ENCODE measurements at regions of chr2 and their contacts with region 1.

Region 1: GRCh38 chr2:232550354-232551249 is at the starts of genes EIF4E2 and TIGD1:
- DNase-seq: peak; percentile 82 to 93 (median 90)
- ATAC-seq: peak; percentile 91
- H3K4me3 ChIP-seq: peak within 1 kb of the TSS; percentile 88
- H3K4me3 Mint-ChIP-seq: peak within 1 kb of the TSS; percentile 91 to 100 (median 100)
- H3K27ac ChIP-seq: peak within 1 kb of the TSS; percentile 92
- H3K27ac Mint-ChIP-seq: peak within 1 kb of the TSS; percentile 97 to 100 (median 100)
- H3K4me1 ChIP-seq: peaks cover 15 to 36% of the 10 kb centered on the region in 2 donors
- H3K4me1 Mint-ChIP-seq: peaks cover 53 to 86% (median 83%) of the 10 kb centered on the region in 7 donors
- H3K27me3 ChIP-seq: no peaks in the 10 kb centered on the region
- H3K27me3 Mint-ChIP-seq: no peaks in the 10 kb centered on the region
- total RNA-seq, gene EIF4E2: 51.9 to 77.6 (median 61.6) TPM
- total RNA-seq, gene TIGD1: 9.7 to 23.4 (median 19.3) TPM

Region 2: GRCh38 chr2:231463698-231464575 is 1086.7 kb before region 1 on chr2 and contains the start of gene NCL:
- CTCF ChIA-PET with region 1: no interaction called
- POLR2A ChIA-PET with region 1: interaction called, 4 read pairs
- intact Hi-C with region 1: loop called in 1 of 2 experiments (anchors 1 kb)
- DNase-seq: peak; percentile 75 to 96 (median 91)
- ATAC-seq: peak; percentile 73
- H3K4me3 ChIP-seq: peak within 1 kb of the TSS; percentile 65
- H3K4me3 Mint-ChIP-seq: peak within 1 kb of the TSS; percentile 90 to 99 (median 95)
- H3K27ac ChIP-seq: peak within 1 kb of the TSS; percentile 96
- H3K27ac Mint-ChIP-seq: peak within 1 kb of the TSS; percentile 96 to 100 (median 100)
- H3K4me1 ChIP-seq: peaks cover 26 to 28% of the 10 kb centered on the region in 2 donors
- H3K4me1 Mint-ChIP-seq: peaks cover 39 to 65% (median 44%) of the 10 kb centered on the region in 7 donors
- H3K27me3 ChIP-seq: no peaks in the 10 kb centered on the region
- H3K27me3 Mint-ChIP-seq: no peaks in the 10 kb centered on the region
- total RNA-seq, gene NCL: 411 to 647 (median 426) TPM

Region 3: GRCh38 chr2:231786177-231786916 is 764.3 kb before region 1 on chr2 and contains the start of gene COPS7B:
- CTCF ChIA-PET with region 1: no interaction called
- POLR2A ChIA-PET with region 1: interaction called, 3 read pairs
- intact Hi-C with region 1: loop called in 1 of 2 experiments (anchors 1 kb)
- DNase-seq: peak; percentile 62 to 87 (median 76)
- ATAC-seq: peak; percentile 77
- H3K4me3 ChIP-seq: peak within 1 kb of the TSS; percentile 88
- H3K4me3 Mint-ChIP-seq: peak within 1 kb of the TSS; percentile 85 to 95 (median 92)
- H3K27ac ChIP-seq: peak within 1 kb of the TSS; percentile 82
- H3K27ac Mint-ChIP-seq: peak within 1 kb of the TSS; percentile 48 to 95 (median 83)
- H3K4me1 ChIP-seq: peaks cover 24 to 31% of the 10 kb centered on the region in 2 donors
- H3K4me1 Mint-ChIP-seq: peaks cover 50 to 93% (median 85%) of the 10 kb centered on the region in 7 donors
- H3K27me3 ChIP-seq: no peaks in the 10 kb centered on the region
- H3K27me3 Mint-ChIP-seq: no peaks in the 10 kb centered on the region
- total RNA-seq, gene COPS7B: 33.4 to 60.6 (median 50.6) TPM

Region 4: DNA sequence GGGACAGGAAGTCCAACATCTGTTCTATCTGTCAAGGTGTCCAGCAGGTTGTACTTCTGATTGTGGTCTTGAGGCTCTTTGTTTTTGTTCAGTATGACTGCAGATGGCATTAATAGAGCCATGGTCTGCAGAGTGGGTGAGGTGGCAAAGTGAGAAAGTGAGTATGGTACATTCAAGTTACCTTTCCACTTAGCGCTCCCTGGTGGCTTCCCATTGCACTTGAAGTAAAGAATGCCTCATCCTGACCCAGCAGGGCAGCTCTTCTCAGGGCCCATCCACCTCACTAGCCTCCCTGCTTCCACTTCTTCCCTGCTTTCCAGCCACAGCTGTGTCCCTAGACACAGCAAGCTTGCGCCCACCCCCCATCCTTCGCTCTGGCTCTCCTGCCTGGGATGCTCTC is 320.0 kb before region 1 on chr2:
- CTCF ChIA-PET with region 1: no interaction called
- POLR2A ChIA-PET with region 1: no interaction called
- intact Hi-C with region 1: no loop called
- DNase-seq: no peak
- ATAC-seq: no peak
- H3K4me3 ChIP-seq: no peak overlapping the region
- H3K4me3 Mint-ChIP-seq: no peak overlapping the region
- H3K27ac ChIP-seq: no peak overlapping the region
- H3K27ac Mint-ChIP-seq: peak overlapping the region in 1 of 9 donors; percentile 39
- H3K4me1 ChIP-seq: no peaks in the 10 kb centered on the region
- H3K4me1 Mint-ChIP-seq: peaks cover 12 to 39% (median 24%) of the 10 kb centered on the region in 7 donors
- H3K27me3 ChIP-seq: no peaks in the 10 kb centered on the region
- H3K27me3 Mint-ChIP-seq: no peaks in the 10 kb centered on the region

Region 5: DNA sequence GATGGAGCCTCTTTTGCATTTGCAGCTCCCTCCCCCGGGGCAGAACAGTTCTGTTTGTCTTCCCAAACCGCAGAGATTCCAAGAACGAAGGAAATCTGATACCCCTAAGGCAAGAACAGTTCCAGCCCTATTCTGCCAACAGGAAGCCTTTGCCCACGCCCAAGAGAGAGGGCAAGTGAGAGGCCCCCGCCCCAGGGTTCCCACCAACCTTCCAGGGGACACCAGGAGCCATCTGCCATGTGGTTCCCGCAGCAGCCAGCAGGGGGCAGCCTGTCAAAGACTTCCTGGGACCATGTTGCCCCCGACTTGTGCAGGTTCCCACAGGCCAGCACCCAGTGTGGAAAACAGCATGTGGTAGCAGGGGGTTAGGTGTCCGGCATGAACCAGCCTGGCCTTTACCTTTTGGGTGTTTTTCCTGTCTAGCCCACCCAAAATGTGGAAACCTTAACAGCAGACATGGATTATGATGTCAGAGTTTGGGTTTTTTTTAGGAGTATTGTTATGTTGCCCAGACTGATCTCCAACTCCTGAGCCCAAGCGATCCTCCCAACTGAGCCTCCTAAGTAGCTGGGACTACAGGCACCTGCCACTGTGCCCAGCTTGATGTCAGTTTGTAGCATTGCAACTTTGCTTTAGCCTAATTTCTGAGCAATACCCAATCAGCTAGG is 61.1 kb after region 1 on chr2:
- CTCF ChIA-PET with region 1: no interaction called
- POLR2A ChIA-PET with region 1: no interaction called
- intact Hi-C with region 1: loop called (anchors 2 to 5 kb)
- DNase-seq: peak; percentile 18 to 72 (median 48)
- ATAC-seq: peak; percentile 72
- H3K4me3 ChIP-seq: no peak overlapping the region
- H3K4me3 Mint-ChIP-seq: no peak overlapping the region
- H3K27ac ChIP-seq: no peak overlapping the region
- H3K27ac Mint-ChIP-seq: no peak overlapping the region
- H3K4me1 ChIP-seq: no peaks in the 10 kb centered on the region
- H3K4me1 Mint-ChIP-seq: no peaks in the 10 kb centered on the region
- H3K27me3 ChIP-seq: no peaks in the 10 kb centered on the region
- H3K27me3 Mint-ChIP-seq: no peaks in the 10 kb centered on the region

Region 6: DNA sequence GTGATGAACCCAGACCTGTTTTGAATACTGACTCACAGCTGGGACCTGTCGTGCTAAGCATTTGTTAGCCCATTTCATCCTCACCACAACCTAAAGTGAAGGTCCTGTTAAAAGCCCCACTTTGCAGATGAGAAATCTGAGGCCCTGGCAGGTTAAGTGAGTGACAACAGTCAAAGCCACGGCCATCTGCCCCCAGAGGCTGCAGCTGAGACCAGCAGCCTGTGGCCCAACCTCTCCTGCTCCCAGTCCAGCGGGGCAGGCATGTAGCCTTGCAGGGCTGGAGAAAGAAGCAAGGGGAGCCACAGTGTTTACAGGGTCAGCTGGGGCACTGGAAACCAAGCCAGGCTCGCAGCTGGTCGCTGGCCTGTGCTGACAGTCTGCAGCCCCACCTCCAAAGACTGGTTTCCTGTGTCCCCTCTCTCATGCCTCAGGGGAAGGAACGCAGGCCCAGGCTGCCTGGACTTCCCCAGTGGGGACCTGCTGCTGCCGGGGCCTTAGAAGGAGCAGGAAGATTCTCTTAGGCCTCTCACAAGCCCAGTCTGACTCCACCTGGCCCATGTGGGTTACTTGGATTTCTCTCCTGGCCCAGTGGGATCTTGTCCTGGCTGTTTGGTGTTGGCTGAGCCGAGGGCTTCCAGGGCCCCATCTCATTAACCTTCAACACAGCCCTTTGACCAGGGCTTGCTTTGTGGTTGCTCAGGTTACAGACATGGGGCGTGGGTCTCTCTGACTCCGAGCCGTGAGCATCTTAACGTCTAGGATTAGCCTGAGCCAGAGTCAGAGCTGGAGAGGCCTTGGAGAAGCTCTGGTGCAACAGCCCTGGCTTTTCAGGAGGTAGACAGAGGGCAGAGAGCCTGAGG is 511.2 kb after region 1 on chr2:
- CTCF ChIA-PET with region 1: no interaction called
- POLR2A ChIA-PET with region 1: no interaction called
- intact Hi-C with region 1: loop called in 1 of 2 experiments (anchors 2 kb)
- DNase-seq: peak in 1 of 9 donors; percentile 41
- ATAC-seq: peak; percentile 32
- H3K4me3 ChIP-seq: peak overlapping the region; percentile 88
- H3K4me3 Mint-ChIP-seq: peak overlapping the region; percentile 86 to 98 (median 96)
- H3K27ac ChIP-seq: peak overlapping the region; percentile 85
- H3K27ac Mint-ChIP-seq: peak overlapping the region; percentile 90 to 99 (median 95)
- H3K4me1 ChIP-seq: peaks cover 33 to 41% of the 10 kb centered on the region in 2 donors
- H3K4me1 Mint-ChIP-seq: peaks cover 35 to 60% (median 48%) of the 10 kb centered on the region in 7 donors
- H3K27me3 ChIP-seq: no peaks in the 10 kb centered on the region
- H3K27me3 Mint-ChIP-seq: no peaks in the 10 kb centered on the region

Region 7: GRCh38 chr2:234300932-234301823 is 1750.6 kb after region 1 on chr2:
- CTCF ChIA-PET with region 1: no interaction called
- POLR2A ChIA-PET with region 1: no interaction called
- intact Hi-C with region 1: loop called in 1 of 2 experiments (anchors 5 kb)
- DNase-seq: peak in 3 of 9 donors; percentile 15 to 34 (median 21)
- ATAC-seq: no peak
- H3K4me3 ChIP-seq: peak overlapping the region; percentile 12
- H3K4me3 Mint-ChIP-seq: peak overlapping the region; percentile 16 to 81 (median 66)
- H3K27ac ChIP-seq: no peak overlapping the region
- H3K27ac Mint-ChIP-seq: peak overlapping the region; percentile 64 to 95 (median 83)
- H3K4me1 ChIP-seq: peaks cover 11 to 57% of the 10 kb centered on the region in 2 donors
- H3K4me1 Mint-ChIP-seq: peaks cover 34 to 79% (median 68%) of the 10 kb centered on the region in 7 donors
- H3K27me3 ChIP-seq: no peaks in the 10 kb centered on the region
- H3K27me3 Mint-ChIP-seq: no peaks in the 10 kb centered on the region

Measured in naive thymus-derived CD4-positive, alpha-beta T cell (primary cell).